ENCODE measurements at regions of chr22 and their contacts with region 1.

Region 1: GRCh38 chr22:25076336-25076735 is 123.3 kb upstream of the CRYBB3 start:
- DNase-seq: peak in 3 of 14 experiments; percentile 30 to 59 (median 37)
- ATAC-seq: peak; percentile 30
- H3K4me3 ChIP-seq: no peak overlapping the region
- H3K4me3 Mint-ChIP-seq: peak overlapping the region; percentile 77
- H3K27ac ChIP-seq: peak overlapping the region in 1 of 2 donors; percentile 40
- H3K27ac Mint-ChIP-seq: peak overlapping the region; percentile 87
- H3K4me1 ChIP-seq: peaks cover 44% of the 10 kb centered on the region
- H3K4me1 Mint-ChIP-seq: peaks cover 85% of the 10 kb centered on the region
- H3K27me3 ChIP-seq: no peaks in the 10 kb centered on the region
- H3K27me3 Mint-ChIP-seq: no peaks in the 10 kb centered on the region
- CTCF ChIP-seq: no peak

Region 2: GRCh38 chr22:25062386-25063085 is 13.8 kb before region 1 on chr22:
- CTCF ChIA-PET with region 1: interaction called, 17 read pairs
- POLR2A ChIA-PET with region 1: interaction called, 57 read pairs
- intact Hi-C with region 1: loop called (anchors 1 kb)
- DNase-seq: peak; percentile 72 to 93 (median 86)
- ATAC-seq: peak; percentile 88
- H3K4me3 ChIP-seq: peak overlapping the region; percentile 45
- H3K4me3 Mint-ChIP-seq: peak overlapping the region; percentile 87
- H3K27ac ChIP-seq: peak overlapping the region; percentile 43 to 91
- H3K27ac Mint-ChIP-seq: peak overlapping the region; percentile 96
- H3K4me1 ChIP-seq: peaks cover 68% of the 10 kb centered on the region
- H3K4me1 Mint-ChIP-seq: peaks cover 54% of the 10 kb centered on the region
- H3K27me3 ChIP-seq: no peaks in the 10 kb centered on the region
- H3K27me3 Mint-ChIP-seq: no peaks in the 10 kb centered on the region
- CTCF ChIP-seq: no peak